A673 (cell line): ENCODE measurements at regions of chr7 and their contacts with region 1.

Region 1: GRCh38 chr7:94395141-94396036 is 694 bp downstream of the COL1A2 start:
- DNase-seq: peak; percentile 92
- H3K4me3 ChIP-seq: peak overlapping the region; percentile 55
- H3K27ac ChIP-seq: peak overlapping the region; percentile 62
- H3K4me1 ChIP-seq: peaks cover 27% of the 10 kb centered on the region
- H3K27me3 ChIP-seq: no peaks in the 10 kb centered on the region
- CTCF ChIP-seq: peak; percentile 90

Region 2: GRCh38 chr7:93715234-93715633 is 680.2 kb before region 1 on chr7:
- CTCF ChIA-PET with region 1: no interaction called
- POLR2A ChIA-PET with region 1: no interaction called
- intact Hi-C with region 1: loop called (anchors 10 kb)
- DNase-seq: peak; percentile 68
- H3K4me3 ChIP-seq: no peak overlapping the region
- H3K27ac ChIP-seq: no peak overlapping the region
- H3K4me1 ChIP-seq: no peaks in the 10 kb centered on the region
- H3K27me3 ChIP-seq: peaks cover 5% of the 10 kb centered on the region
- CTCF ChIP-seq: peak; percentile 77

Region 3: GRCh38 chr7:93902777-93903423 is 492.5 kb before region 1 on chr7:
- CTCF ChIA-PET with region 1: no interaction called
- POLR2A ChIA-PET with region 1: no interaction called
- intact Hi-C with region 1: loop called (anchors 10 kb)
- DNase-seq: peak; percentile 82
- H3K4me3 ChIP-seq: no peak overlapping the region
- H3K27ac ChIP-seq: no peak overlapping the region
- H3K4me1 ChIP-seq: peaks cover 2% of the 10 kb centered on the region
- H3K27me3 ChIP-seq: no peaks in the 10 kb centered on the region
- CTCF ChIP-seq: peak; percentile 89

Region 4: DNA sequence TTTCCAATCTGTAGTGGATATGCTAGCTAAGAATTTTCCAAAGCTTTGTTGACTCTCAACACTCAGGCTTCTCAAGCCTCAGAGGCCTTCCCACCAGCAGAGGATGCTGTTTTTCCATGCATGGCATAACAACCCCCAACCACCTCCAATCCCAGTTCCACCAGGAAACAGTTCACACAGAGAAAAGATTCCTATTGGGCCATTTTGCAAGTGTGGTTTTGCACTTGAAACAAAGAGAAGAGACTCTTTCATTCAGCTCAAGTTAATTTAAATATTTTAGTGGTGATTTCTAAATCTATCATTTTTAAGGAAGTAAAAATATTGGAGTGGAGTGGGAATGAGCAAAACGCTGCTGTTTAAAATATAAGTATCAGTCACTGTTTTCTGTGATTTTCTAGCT is 106.3 kb before region 1 on chr7:
- CTCF ChIA-PET with region 1: interaction called, 111 read pairs
- POLR2A ChIA-PET with region 1: no interaction called
- intact Hi-C with region 1: loop called (anchors 1 kb)
- DNase-seq: peak; percentile 93
- H3K4me3 ChIP-seq: no peak overlapping the region
- H3K27ac ChIP-seq: no peak overlapping the region
- H3K4me1 ChIP-seq: peaks cover 11% of the 10 kb centered on the region
- H3K27me3 ChIP-seq: no peaks in the 10 kb centered on the region
- CTCF ChIP-seq: peak; percentile 97

Region 5: DNA sequence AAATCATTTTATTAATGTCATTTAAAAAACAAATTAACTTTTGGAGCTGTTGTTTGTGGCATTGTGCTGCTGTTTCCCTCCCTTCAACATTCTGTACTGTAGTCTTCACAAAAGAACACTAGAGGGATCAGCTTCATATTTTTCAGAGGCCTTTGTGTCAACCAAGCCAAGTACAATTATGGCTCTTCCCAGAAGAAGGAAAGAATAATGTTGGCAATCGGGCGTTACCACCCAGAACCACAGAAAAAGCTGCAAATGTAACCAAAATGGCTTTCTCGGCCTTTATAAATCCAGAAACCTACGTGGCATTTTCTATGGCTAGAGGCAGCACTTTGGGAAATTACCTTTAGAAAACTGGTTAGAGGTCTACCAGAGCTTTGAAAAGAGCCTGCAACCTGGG is 99.5 kb before region 1 on chr7:
- CTCF ChIA-PET with region 1: interaction called, 111 read pairs
- POLR2A ChIA-PET with region 1: interaction called, 4 read pairs
- intact Hi-C with region 1: loop called (anchors 1 kb)
- DNase-seq: peak; percentile 85
- H3K4me3 ChIP-seq: no peak overlapping the region
- H3K27ac ChIP-seq: no peak overlapping the region
- H3K4me1 ChIP-seq: peaks cover 8% of the 10 kb centered on the region
- H3K27me3 ChIP-seq: no peaks in the 10 kb centered on the region
- CTCF ChIP-seq: peak; percentile 75

Region 6: GRCh38 chr7:94348142-94348541 is 47.2 kb before region 1 on chr7:
- CTCF ChIA-PET with region 1: interaction called, 3 read pairs
- POLR2A ChIA-PET with region 1: no interaction called
- intact Hi-C with region 1: loop called (anchors 2 kb)
- DNase-seq: peak; percentile 90
- H3K4me3 ChIP-seq: no peak overlapping the region
- H3K27ac ChIP-seq: peak overlapping the region; percentile 59
- H3K4me1 ChIP-seq: peaks cover 28% of the 10 kb centered on the region
- H3K27me3 ChIP-seq: no peaks in the 10 kb centered on the region
- CTCF ChIP-seq: no peak

Region 7: GRCh38 chr7:94374231-94374630 is 21.2 kb before region 1 on chr7:
- CTCF ChIA-PET with region 1: interaction called, 17 read pairs
- POLR2A ChIA-PET with region 1: no interaction called
- intact Hi-C with region 1: loop called (anchors 2 kb)
- DNase-seq: peak; percentile 79
- H3K4me3 ChIP-seq: no peak overlapping the region
- H3K27ac ChIP-seq: peak overlapping the region; percentile 98
- H3K4me1 ChIP-seq: peaks cover 44% of the 10 kb centered on the region
- H3K27me3 ChIP-seq: no peaks in the 10 kb centered on the region
- CTCF ChIP-seq: no peak